H1 (cell line): ENCODE measurements at regions of chr2 and their contacts with region 1.

Region 1: GRCh38 chr2:212892193-212892592 is 259.2 kb downstream of the IKZF2 start:
- DNase-seq: no peak
- H3K4me3 ChIP-seq: no peak overlapping the region
- H3K27ac ChIP-seq: no peak overlapping the region
- H3K4me1 ChIP-seq: no peaks in the 10 kb centered on the region
- H3K27me3 ChIP-seq: no peaks in the 10 kb centered on the region
- CTCF ChIP-seq: peak in 2 of 3 experiments; percentile 47 to 51; a peak in 3 of 4 replicates
- EP300 ChIP-seq: no peak
- POLR2A ChIP-seq: no peak
- RAD21 ChIP-seq: peak; percentile 47 to 62

Region 2: DNA sequence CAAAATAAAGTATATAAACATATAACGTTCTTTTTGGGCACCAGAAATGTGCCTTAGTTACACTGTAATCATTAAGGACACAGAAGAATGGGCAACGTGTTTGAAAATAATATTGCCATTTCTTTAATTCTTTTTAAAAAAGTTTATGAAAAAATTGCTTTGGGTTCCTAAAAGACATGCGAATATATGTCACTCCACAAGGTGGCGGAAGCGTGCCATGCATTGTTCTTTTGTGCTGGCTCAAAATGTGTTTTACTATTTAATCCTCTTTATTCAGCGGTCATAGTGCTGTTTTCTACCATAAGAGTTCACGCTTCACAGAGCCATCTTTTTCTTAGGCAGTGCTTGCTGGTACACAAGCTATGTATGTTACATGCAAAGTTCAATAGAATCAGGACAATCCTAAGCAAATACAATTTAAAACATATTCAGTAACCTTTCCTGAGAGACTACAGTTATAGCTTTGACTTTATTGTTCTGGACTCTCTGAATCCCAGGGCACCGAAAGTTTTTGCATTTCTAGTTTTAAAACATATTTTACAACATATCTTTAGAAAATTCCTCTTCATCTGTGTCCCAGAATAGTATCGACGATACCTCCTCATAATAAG is 205.8 kb before region 1 on chr2:
- CTCF ChIA-PET with region 1: interaction called, 10 read pairs
- POLR2A ChIA-PET with region 1: no interaction called
- DNase-seq: peak; percentile 7 to 62
- H3K4me3 ChIP-seq: no peak overlapping the region
- H3K27ac ChIP-seq: no peak overlapping the region
- H3K4me1 ChIP-seq: no peaks in the 10 kb centered on the region
- H3K27me3 ChIP-seq: no peaks in the 10 kb centered on the region
- CTCF ChIP-seq: peak in 2 of 3 experiments; percentile 59 to 64; a peak in 3 of 4 replicates
- EP300 ChIP-seq: no peak
- POLR2A ChIP-seq: no peak
- RAD21 ChIP-seq: peak; percentile 93

Region 3: GRCh38 chr2:212777020-212777491 is 115.1 kb before region 1 on chr2:
- CTCF ChIA-PET with region 1: interaction called, 13 read pairs
- POLR2A ChIA-PET with region 1: no interaction called
- DNase-seq: no peak
- H3K4me3 ChIP-seq: no peak overlapping the region
- H3K27ac ChIP-seq: no peak overlapping the region
- H3K4me1 ChIP-seq: peaks cover 0 to 2% (median 0%) of the 10 kb centered on the region in 4 experiments; a peak in 1 of 7 replicates
- H3K27me3 ChIP-seq: no peaks in the 10 kb centered on the region
- CTCF ChIP-seq: peak in 1 of 3 experiments; percentile 31; a peak in 2 of 4 replicates
- EP300 ChIP-seq: no peak
- POLR2A ChIP-seq: no peak
- RAD21 ChIP-seq: peak in 1 of 2 experiments; percentile 51; a peak in 3 of 4 replicates

Region 4: DNA sequence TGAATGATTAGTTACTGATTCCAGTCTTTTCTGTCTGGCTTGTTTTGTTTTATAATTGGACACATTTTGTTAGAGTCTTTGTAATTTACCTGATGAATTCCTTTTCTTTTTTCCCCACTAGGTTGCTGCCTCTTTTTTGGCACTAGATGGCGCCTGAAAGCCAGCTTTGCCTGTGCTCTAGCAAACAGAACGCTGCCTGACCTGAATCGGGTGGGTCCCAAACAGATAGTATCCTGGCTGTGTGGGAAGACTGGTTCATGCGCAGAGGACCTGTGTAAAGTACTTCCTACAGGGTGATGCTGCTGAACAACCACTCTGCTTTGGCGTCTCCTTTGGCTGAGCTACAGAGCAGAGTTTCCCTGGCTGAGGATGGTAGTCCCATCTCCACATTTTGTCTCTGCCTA is 29.0 kb before region 1 on chr2:
- CTCF ChIA-PET with region 1: interaction called, 22 read pairs
- POLR2A ChIA-PET with region 1: no interaction called
- DNase-seq: peak; percentile 29 to 56
- H3K4me3 ChIP-seq: no peak overlapping the region; a peak in 1 of 8 replicates
- H3K27ac ChIP-seq: no peak overlapping the region
- H3K4me1 ChIP-seq: no peaks in the 10 kb centered on the region
- H3K27me3 ChIP-seq: no peaks in the 10 kb centered on the region
- CTCF ChIP-seq: peak; percentile 38 to 84 (median 82)
- EP300 ChIP-seq: no peak
- POLR2A ChIP-seq: no peak
- RAD21 ChIP-seq: peak; percentile 97 to 98

Region 5: DNA sequence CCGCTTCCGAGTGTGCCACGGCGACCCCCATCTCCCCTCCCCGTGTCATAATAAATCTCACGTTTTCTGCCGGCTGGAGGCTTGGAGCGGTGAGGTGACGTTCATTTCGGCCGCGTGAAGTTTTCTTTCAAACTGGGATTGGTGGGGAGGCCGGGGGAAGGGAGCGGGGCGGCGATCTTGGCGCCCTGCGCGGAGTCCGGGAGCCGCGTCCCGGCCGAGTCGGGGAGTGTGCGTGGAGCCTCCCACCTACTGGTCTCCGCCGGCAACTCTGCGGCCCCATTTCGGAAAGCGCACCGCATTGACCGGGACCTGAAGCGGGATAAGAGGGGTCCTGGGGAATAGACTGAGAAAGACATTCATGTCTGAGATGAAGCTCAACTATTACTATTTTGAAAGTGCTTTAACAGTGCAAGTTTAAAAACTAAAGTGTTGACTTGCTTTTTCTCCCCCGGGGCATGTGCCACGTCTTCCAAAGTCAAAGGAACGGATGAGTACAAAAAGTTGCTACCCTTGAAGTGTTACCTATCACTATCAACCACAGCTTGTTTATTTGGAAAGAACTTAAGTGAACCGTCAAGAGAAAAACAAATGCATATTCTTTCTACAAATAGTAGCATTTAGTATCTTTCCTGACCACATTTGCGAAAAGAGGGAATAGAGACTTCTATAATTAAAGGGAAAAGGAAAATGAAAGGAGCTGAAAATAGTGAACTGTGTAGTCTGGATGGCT is 260.0 kb after region 1 on chr2:
- CTCF ChIA-PET with region 1: interaction called, 13 read pairs
- POLR2A ChIA-PET with region 1: no interaction called
- DNase-seq: no peak
- H3K4me3 ChIP-seq: peak overlapping the region; percentile 63 to 97 (median 78)
- H3K27ac ChIP-seq: no peak overlapping the region
- H3K4me1 ChIP-seq: peaks cover 0 to 10% (median 2%) of the 10 kb centered on the region in 4 experiments; a peak in 2 of 7 replicates
- H3K27me3 ChIP-seq: no peaks in the 10 kb centered on the region
- CTCF ChIP-seq: peak in 2 of 3 experiments; percentile 2 to 11; a peak in 3 of 4 replicates
- EP300 ChIP-seq: no peak
- POLR2A ChIP-seq: no peak
- RAD21 ChIP-seq: peak; percentile 15 to 29; a peak in 2 of 4 replicates